HCT116 (cell line): ENCODE measurements at regions of chr20 and their contacts with region 1.

Region 1: DNA sequence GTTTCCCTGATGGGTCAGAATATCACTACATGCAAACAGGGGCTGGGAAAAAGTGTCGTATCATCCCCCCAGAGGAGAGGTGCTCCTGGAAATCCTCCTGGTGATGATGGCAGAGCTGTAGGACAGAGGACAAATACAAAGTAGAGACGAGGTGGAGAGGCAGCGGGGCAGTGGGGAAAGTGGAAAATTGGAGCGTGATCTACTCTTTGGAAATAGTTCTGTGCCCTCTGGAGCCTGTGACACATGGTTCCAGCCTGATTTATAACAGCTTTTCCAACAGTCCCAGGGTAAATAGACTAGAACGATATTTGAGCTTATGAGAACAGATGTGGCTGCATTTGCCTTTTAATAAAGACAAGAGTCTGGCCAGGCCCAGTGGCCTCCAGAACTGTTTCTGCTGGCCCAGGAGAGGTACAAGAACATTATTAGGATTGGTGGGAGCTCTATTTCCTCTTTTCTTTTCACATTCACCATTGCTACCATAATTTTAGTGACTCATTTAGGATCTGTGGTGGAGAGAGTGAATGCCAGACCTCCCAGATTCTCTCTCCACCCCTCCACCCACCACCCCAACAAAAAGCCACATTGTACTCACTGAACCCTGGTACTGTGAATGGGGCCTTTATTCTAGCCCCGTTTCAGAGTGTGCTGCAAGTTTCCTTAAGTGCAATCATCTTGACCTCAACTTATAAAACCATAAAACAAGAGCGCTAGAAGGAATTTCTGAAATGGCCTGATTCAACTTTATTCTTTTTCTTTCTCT is 78.3 kb downstream of the BTBD3 start:
- DNase-seq: no peak
- ATAC-seq: no peak
- H3K4me3 ChIP-seq: no peak overlapping the region
- H3K27ac ChIP-seq: no peak overlapping the region
- H3K4me1 ChIP-seq: no peaks in the 10 kb centered on the region
- H3K27me3 ChIP-seq: peaks cover 7% of the 10 kb centered on the region; the same call in 1 of the 2 replicates
- CTCF ChIP-seq: no peak
- POLR2A ChIP-seq: no peak
- RAD21 ChIP-seq: no peak

Region 2: GRCh38 chr20:12012241-12013222 is 16.5 kb after region 1 on chr20:
- CTCF ChIA-PET with region 1: interaction called, 10 read pairs
- POLR2A ChIA-PET with region 1: no interaction called
- RAD21 ChIA-PET with region 1: no interaction called
- intact Hi-C with region 1: no loop called
- DNase-seq: peak; percentile 31
- ATAC-seq: peak; percentile 90
- H3K4me3 ChIP-seq: no peak overlapping the region
- H3K27ac ChIP-seq: no peak overlapping the region
- H3K4me1 ChIP-seq: no peaks in the 10 kb centered on the region
- H3K27me3 ChIP-seq: no peaks in the 10 kb centered on the region
- CTCF ChIP-seq: peak; percentile 93 to 98 (median 95)
- POLR2A ChIP-seq: no peak
- RAD21 ChIP-seq: peak; percentile 31